ENCODE measurements at regions of chr4 and their contacts with region 1.

Region 1: DNA sequence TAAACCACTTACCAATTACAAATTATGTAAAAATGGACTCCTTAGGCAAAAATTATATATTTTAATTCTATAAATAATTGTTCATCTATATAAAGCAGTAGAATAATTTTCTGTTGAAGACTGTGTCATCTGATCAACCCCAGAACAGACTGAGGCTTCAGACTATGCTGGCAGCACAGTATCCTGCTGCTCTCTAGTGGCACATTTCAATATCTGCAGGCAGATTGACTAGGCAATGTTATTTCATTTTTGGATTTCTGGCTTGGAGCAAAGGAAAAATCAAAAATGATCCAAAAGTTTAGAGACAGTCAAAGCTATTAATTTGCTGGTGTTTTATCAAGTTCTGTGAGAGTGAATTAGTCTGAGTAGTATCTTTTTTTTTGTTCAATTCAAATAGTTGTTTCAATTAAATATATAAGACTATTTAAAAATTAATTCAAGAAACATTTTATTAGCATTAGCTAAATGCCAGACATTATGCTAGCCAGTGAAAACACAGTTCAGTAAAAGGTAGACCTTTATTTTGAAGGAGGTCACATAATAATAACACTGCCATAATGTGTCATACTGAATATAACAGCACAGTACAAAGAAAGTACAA is 21.3 kb upstream of the SULT1E1 start:
- DNase-seq: peak in 2 of 4 donors; percentile 33 to 71
- ATAC-seq: peak; percentile 97
- H3K4me3 ChIP-seq: no peak overlapping the region
- H3K27ac ChIP-seq: no peak overlapping the region
- H3K4me1 ChIP-seq: no peaks in the 10 kb centered on the region
- H3K27me3 ChIP-seq: no peaks in the 10 kb centered on the region
- CTCF ChIP-seq: peak; percentile 70 to 71

Region 2: DNA sequence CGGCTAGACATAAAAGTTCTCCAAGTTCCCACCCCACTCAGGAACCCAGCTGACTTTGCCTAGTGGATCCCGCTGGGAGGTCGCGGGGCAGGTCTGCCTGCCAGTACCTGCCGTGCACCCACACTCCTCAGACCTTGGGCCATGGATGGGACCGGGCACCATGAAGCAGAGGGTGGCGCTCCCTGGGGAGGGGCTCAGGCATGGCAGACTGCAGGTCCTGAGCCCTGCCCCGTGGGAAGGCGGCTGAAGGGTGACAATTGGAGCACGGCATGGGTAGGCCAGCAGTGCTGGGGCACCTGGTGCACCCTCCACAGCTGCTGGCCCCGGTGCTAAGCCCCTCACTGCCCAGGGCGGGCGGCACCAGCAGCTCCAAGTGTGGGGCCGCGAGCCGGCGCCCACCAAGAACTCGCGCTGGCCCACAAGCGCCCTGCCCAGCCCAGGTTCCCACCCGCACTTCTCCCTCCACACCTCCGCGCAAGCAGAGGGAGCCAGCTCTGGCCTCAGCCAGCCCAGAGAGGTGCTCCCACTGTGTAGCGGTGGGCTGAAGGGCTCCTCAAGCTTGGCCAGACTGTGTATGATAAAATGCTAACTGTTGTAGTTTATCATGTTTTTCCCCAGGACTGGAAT is 304.9 kb before region 1 on chr4:
- intact Hi-C with region 1: no loop called
- DNase-seq: peak in 1 of 4 donors; percentile 55
- ATAC-seq: no peak
- H3K4me3 ChIP-seq: no peak overlapping the region
- H3K27ac ChIP-seq: no peak overlapping the region
- H3K4me1 ChIP-seq: no peaks in the 10 kb centered on the region
- H3K27me3 ChIP-seq: no peaks in the 10 kb centered on the region
- CTCF ChIP-seq: no peak

Region 3: GRCh38 chr4:69689599-69689998 is 191.7 kb before region 1 on chr4:
- intact Hi-C with region 1: loop called in 1 of 2 experiments (anchors 5 kb)
- DNase-seq: peak in 2 of 4 donors; percentile 54 to 73
- ATAC-seq: peak; percentile 81
- H3K4me3 ChIP-seq: no peak overlapping the region
- H3K27ac ChIP-seq: no peak overlapping the region
- H3K4me1 ChIP-seq: peaks cover 3 to 5% of the 10 kb centered on the region in 2 donors
- H3K27me3 ChIP-seq: no peaks in the 10 kb centered on the region
- CTCF ChIP-seq: peak; percentile 43 to 44